CD14-positive monocyte (primary cell): ENCODE measurements at regions of chr5 and their contacts with region 1.

Region 1: GRCh38 chr5:132500931-132501630 is 10.5 kb upstream of the IRF1 start:
- DNase-seq: peak; percentile 64 to 86 (median 74)
- H3K4me3 ChIP-seq: no peak overlapping the region
- H3K4me3 Mint-ChIP-seq: no peak overlapping the region
- H3K27ac ChIP-seq: peak overlapping the region in 1 of 2 donors; percentile 45
- H3K27ac Mint-ChIP-seq: peak overlapping the region in 5 of 7 donors; percentile 26 to 81 (median 50)
- H3K4me1 ChIP-seq: peaks cover 23 to 34% of the 10 kb centered on the region in 2 donors
- H3K4me1 Mint-ChIP-seq: peaks cover 36% of the 10 kb centered on the region
- H3K27me3 ChIP-seq: no peaks in the 10 kb centered on the region
- H3K27me3 Mint-ChIP-seq: peaks cover 0 to 4% (median 0%) of the 10 kb centered on the region in 3 donors
- CTCF ChIP-seq: peak; percentile 88

Region 2: GRCh38 chr5:132718544-132719312 is 217.6 kb after region 1 on chr5:
- intact Hi-C with region 1: no loop called
- DNase-seq: no peak
- H3K4me3 ChIP-seq: no peak overlapping the region
- H3K4me3 Mint-ChIP-seq: no peak overlapping the region
- H3K27ac ChIP-seq: no peak overlapping the region
- H3K27ac Mint-ChIP-seq: no peak overlapping the region
- H3K4me1 ChIP-seq: no peaks in the 10 kb centered on the region
- H3K4me1 Mint-ChIP-seq: peaks cover 3% of the 10 kb centered on the region
- H3K27me3 ChIP-seq: no peaks in the 10 kb centered on the region
- H3K27me3 Mint-ChIP-seq: peaks cover 1 to 2% (median 1%) of the 10 kb centered on the region in 3 donors
- CTCF ChIP-seq: no peak

Region 3: DNA sequence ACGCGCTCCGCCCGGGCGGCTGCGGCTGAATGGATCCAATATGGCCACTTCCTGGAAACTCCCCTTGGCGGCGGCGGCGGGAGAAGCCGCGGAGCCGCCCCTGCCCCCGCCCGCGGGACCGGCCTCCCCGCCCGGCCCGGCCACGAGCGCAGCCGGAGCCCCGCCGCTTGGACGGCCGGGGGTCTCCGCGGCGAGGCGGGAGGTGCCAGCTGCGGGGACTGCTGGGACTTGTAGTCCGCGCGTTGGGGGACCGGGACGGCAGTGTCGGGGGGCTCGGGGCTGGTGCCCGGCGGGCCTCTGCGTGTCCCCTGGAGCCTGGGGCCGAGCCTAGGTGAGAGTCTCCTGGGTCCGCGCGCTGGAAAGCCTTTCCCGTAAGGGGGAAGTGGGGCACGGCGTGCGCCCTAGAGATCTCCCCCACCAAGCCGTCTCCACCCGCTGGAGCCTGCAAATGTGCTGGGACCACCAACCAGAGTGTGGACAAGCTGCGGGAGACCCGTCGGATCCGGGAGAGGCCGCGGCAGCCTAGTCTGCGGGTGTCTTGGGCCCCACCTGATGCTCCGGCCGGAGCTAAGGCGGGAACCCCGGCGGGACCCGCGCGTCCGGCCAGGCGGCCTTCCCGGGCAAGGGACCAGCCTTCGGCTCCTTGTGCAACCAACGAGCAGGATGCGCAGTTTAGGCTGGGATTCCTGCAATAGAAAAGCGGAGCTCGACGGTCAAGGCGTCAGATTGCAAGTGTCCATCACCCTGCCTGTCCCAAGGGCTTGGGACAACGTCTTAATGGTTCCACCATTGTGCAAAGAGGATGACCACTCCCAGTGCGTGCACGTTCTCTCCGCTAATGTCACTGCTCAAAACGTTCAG is 276.4 kb after region 1 on chr5 and contains the start of gene SEPTIN8:
- intact Hi-C with region 1: no loop called
- DNase-seq: peak; percentile 20 to 48 (median 39)
- H3K4me3 ChIP-seq: peak within 1 kb of the TSS; percentile 46 to 76 (median 61)
- H3K4me3 Mint-ChIP-seq: peak within 1 kb of the TSS; percentile 63 to 86
- H3K27ac ChIP-seq: no peak within 1 kb of the TSS
- H3K27ac Mint-ChIP-seq: no peak within 1 kb of the TSS
- H3K4me1 ChIP-seq: peaks cover 22 to 24% of the 10 kb centered on the region in 2 donors
- H3K4me1 Mint-ChIP-seq: peaks cover 27% of the 10 kb centered on the region
- H3K27me3 ChIP-seq: peaks cover 46 to 73% of the 10 kb centered on the region in 2 donors
- H3K27me3 Mint-ChIP-seq: peaks cover 65 to 84% (median 69%) of the 10 kb centered on the region in 3 donors
- CTCF ChIP-seq: no peak
- polyA plus RNA-seq, gene SEPTIN8: 0.36 to 5.0 (median 0.54) TPM

Region 4: GRCh38 chr5:132813599-132814502 is 312.8 kb after region 1 on chr5:
- intact Hi-C with region 1: loop called in 1 of 2 experiments (anchors 10 kb)
- DNase-seq: no peak
- H3K4me3 ChIP-seq: peak overlapping the region in 1 of 3 experiments; percentile 50
- H3K4me3 Mint-ChIP-seq: peak overlapping the region in 1 of 2 donors; percentile 65
- H3K27ac ChIP-seq: no peak overlapping the region
- H3K27ac Mint-ChIP-seq: no peak overlapping the region
- H3K4me1 ChIP-seq: peaks cover 0 to 23% of the 10 kb centered on the region in 2 donors
- H3K4me1 Mint-ChIP-seq: peaks cover 14% of the 10 kb centered on the region
- H3K27me3 ChIP-seq: peaks cover 46 to 82% of the 10 kb centered on the region in 2 donors
- H3K27me3 Mint-ChIP-seq: peaks cover 70 to 75% (median 71%) of the 10 kb centered on the region in 3 donors
- CTCF ChIP-seq: no peak

Region 5: GRCh38 chr5:132820162-132820754 is 319.2 kb after region 1 on chr5:
- intact Hi-C with region 1: loop called (anchors 10 kb)
- DNase-seq: peak; percentile 81 to 90 (median 86)
- H3K4me3 ChIP-seq: peak overlapping the region in 1 of 3 experiments; percentile 59
- H3K4me3 Mint-ChIP-seq: peak overlapping the region; percentile 6 to 90
- H3K27ac ChIP-seq: no peak overlapping the region
- H3K27ac Mint-ChIP-seq: no peak overlapping the region
- H3K4me1 ChIP-seq: peaks cover 8 to 20% of the 10 kb centered on the region in 2 donors
- H3K4me1 Mint-ChIP-seq: peaks cover 22% of the 10 kb centered on the region
- H3K27me3 ChIP-seq: peaks cover 42 to 85% of the 10 kb centered on the region in 2 donors
- H3K27me3 Mint-ChIP-seq: peaks cover 70 to 76% (median 73%) of the 10 kb centered on the region in 3 donors
- CTCF ChIP-seq: peak; percentile 89